ENCODE measurements at regions of chr4 and their contacts with region 1.

Region 1: DNA sequence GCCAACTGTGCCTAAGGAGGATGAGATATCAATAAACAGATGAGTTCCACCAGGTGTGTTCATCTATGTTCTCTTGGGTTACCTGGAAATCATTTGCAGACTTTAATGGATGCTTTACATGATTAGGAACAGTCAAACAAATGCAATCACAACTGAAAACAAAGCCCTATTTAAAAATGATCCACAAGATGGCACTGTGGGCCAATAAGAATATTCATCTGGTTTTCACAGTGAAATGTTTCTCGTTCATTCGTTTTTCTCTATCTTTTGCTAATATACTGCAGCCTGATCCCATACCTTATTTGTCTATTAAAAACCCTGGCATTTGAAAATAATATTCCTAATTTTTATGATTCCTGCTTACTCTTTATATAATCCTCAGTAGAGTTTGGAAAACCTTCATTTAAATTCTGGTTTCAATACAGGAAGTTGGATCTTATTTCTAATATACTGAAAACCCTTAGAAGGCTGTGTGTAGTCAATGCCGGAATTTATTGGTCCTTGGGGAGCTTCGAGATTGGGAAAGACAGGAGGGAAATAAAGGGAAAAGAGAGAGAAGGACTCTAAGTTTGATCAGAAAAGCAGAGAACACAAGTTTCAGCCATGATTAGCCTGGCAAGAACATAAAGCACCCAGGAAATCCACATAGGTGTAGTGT is 63.8 kb upstream of the TAPT1 start:
- DNase-seq: no peak
- H3K4me3 ChIP-seq: peak overlapping the region in 35 of 59 donors; percentile 4 to 46 (median 19)
- H3K27ac ChIP-seq: peak overlapping the region in 33 of 59 donors; percentile 1 to 78 (median 27)
- H3K27me3 ChIP-seq: no peaks in the 10 kb centered on the region
- CTCF ChIP-seq: peak; percentile 64 to 93 (median 80)

Region 2: GRCh38 chr4:16443504-16444088 is 153.6 kb after region 1 on chr4:
- intact Hi-C with region 1: loop called in 1 of 2 experiments (anchors 5 kb)
- DNase-seq: no peak
- H3K4me3 ChIP-seq: no peak overlapping the region
- H3K27ac ChIP-seq: no peak overlapping the region
- H3K27me3 ChIP-seq: no peaks in the 10 kb centered on the region
- CTCF ChIP-seq: peak; percentile 37 to 71 (median 64)

Region 3: DNA sequence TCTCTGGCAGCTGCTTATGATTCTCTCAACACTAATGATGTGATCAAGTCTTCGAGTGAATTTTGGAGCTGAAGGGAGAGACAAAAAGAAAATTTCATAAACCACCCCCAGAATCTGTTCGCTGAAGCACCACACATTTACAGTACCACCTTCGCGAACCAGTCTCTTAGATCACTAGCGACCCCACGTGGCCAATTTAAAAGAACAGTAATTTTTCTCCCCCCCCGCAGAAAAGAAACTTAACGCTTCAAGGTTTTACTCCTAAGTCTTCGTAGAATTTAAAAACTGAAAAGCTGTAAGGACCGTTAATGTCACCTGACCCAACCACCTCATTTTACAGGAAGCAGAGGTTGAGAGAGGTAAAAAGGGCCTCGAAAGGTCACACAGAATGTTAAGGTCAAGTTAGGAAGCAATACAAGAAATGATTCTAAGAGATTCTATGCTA is 1034.4 kb after region 1 on chr4:
- intact Hi-C with region 1: loop called (anchors 2 to 5 kb)
- DNase-seq: peak in 4 of 10 donors; percentile 29 to 46 (median 38)
- H3K4me3 ChIP-seq: peak overlapping the region in 26 of 59 donors; percentile 1 to 39 (median 23)
- H3K27ac ChIP-seq: peak overlapping the region in 34 of 59 donors; percentile 6 to 81 (median 62)
- H3K27me3 ChIP-seq: no peaks in the 10 kb centered on the region
- CTCF ChIP-seq: peak; percentile 41 to 83 (median 71)

Region 4: GRCh38 chr4:17475481-17475880 is 1185.5 kb after region 1 on chr4:
- intact Hi-C with region 1: loop called in 1 of 2 experiments (anchors 10 kb)
- DNase-seq: no peak
- H3K4me3 ChIP-seq: no peak overlapping the region
- H3K27ac ChIP-seq: no peak overlapping the region
- H3K27me3 ChIP-seq: no peaks in the 10 kb centered on the region
- CTCF ChIP-seq: no peak

Measured in dorsolateral prefrontal cortex (tissue), 120 donors.